Activated T-helper 2 cell treated with anti-CD3 and anti-CD28 coated beads, Interferon-gamma antibody, Interleukin-2, Interleukin-4, amounts not matched to agents 10 μg/mL and 5 μg/mL and 100 μg/mL, durations not matched to agents 14 hours and 24 hours and 36 hours (primary cell): ENCODE measurements at regions of chr9 and their contacts with region 1.

Region 1: DNA sequence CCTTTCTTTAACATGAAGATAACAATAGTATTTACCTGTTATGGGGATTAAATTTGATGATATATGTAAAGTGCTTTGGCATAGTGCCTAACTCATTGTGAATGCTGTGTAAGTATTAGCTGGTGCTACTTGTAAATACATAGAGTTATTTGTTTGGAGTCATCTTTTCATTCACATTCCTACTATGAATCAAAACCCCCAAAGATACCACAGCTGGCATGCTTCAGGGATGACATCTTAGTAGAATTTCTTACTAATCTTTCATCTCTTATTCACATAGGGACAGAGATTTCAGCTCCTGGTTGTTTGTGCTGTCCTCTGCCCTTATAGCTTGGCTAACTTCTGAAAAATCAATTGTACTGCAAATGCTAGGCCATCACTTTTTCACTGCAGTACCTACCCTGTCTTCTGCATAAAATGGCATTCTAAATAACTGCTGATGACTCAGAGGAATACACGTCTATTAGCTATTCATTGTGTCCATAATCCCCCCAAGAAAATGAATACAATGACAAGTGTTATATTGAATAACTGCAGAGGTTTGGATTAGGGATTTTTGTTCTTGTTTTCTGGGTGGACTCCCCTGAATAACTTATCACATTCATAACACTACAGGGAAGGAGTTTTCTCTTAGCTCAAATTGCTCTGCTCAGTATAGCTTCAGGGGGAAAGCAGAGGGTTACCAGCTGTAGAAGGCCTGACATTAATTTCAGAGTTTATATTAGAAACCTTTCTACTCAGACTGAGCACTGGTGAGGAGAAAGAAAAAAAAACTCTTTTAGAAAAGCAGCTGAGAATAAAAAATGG is 192.2 kb upstream of the C9orf72 start:
- DNase-seq: no peak
- H3K4me3 Mint-ChIP-seq: no peak overlapping the region
- H3K27ac Mint-ChIP-seq: no peak overlapping the region
- H3K4me1 Mint-ChIP-seq: peaks cover 14% of the 10 kb centered on the region
- H3K27me3 Mint-ChIP-seq: peaks cover 3% of the 10 kb centered on the region

Region 2: GRCh38 chr9:27732494-27732893 is 33.0 kb before region 1 on chr9:
- intact Hi-C with region 1: loop called (anchors 1 kb)
- DNase-seq: no peak
- H3K4me3 Mint-ChIP-seq: no peak overlapping the region
- H3K27ac Mint-ChIP-seq: peak overlapping the region; percentile 58
- H3K4me1 Mint-ChIP-seq: peaks cover 25% of the 10 kb centered on the region
- H3K27me3 Mint-ChIP-seq: no peaks in the 10 kb centered on the region

Region 3: GRCh38 chr9:27785714-27786100 is 20.2 kb after region 1 on chr9:
- intact Hi-C with region 1: loop called (anchors 2 kb)
- DNase-seq: no peak
- H3K4me3 Mint-ChIP-seq: no peak overlapping the region
- H3K27ac Mint-ChIP-seq: peak overlapping the region; percentile 56
- H3K4me1 Mint-ChIP-seq: peaks cover 16% of the 10 kb centered on the region
- H3K27me3 Mint-ChIP-seq: peaks cover 16% of the 10 kb centered on the region

Region 4: DNA sequence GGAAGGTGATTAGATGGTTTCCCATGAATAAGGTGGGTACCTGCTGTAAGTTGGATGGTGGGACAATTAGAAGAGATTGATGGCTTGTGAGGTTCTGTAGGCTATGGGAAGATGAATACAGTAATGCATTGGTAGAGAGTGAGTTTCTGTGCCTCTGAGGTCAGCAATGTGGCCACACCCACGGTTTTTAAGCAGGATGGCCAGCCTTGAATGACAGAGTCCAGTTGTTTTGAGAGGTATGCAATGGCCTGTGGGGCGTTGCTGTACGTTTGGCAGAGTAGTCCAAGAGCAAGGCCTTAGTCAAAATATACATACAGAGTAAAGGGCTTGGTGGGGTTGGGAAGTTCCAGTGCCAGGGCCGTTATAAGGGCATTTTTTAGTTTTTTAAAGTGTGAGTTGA is 43.4 kb after region 1 on chr9:
- intact Hi-C with region 1: no loop called
- DNase-seq: no peak
- H3K4me3 Mint-ChIP-seq: no peak overlapping the region
- H3K27ac Mint-ChIP-seq: no peak overlapping the region
- H3K4me1 Mint-ChIP-seq: no peaks in the 10 kb centered on the region
- H3K27me3 Mint-ChIP-seq: peaks cover 4% of the 10 kb centered on the region